PC-9 (cell line): ENCODE measurements at regions of chr3 and their contacts with region 1.

Region 1: GRCh38 chr3:102057781-102058421 is 208.6 kb downstream of the NFKBIZ start:
- DNase-seq: no peak
- H3K4me3 ChIP-seq: no peak overlapping the region
- H3K27ac ChIP-seq: no peak overlapping the region
- H3K4me1 ChIP-seq: peaks cover 8% of the 10 kb centered on the region
- H3K27me3 ChIP-seq: no peaks in the 10 kb centered on the region
- CTCF ChIP-seq: no peak

Region 2: GRCh38 chr3:101913173-101913572 is 144.7 kb before region 1 on chr3:
- CTCF ChIA-PET with region 1: no interaction called
- POLR2A ChIA-PET with region 1: no interaction called
- intact Hi-C with region 1: loop called (anchors 5 kb)
- DNase-seq: no peak
- H3K4me3 ChIP-seq: no peak overlapping the region
- H3K27ac ChIP-seq: no peak overlapping the region
- H3K4me1 ChIP-seq: no peaks in the 10 kb centered on the region
- H3K27me3 ChIP-seq: no peaks in the 10 kb centered on the region; the same call in 1 of the 2 replicates
- CTCF ChIP-seq: no peak

Region 3: GRCh38 chr3:102089904-102090492 is 32.1 kb after region 1 on chr3:
- CTCF ChIA-PET with region 1: no interaction called
- POLR2A ChIA-PET with region 1: no interaction called
- intact Hi-C with region 1: no loop called
- DNase-seq: no peak
- H3K4me3 ChIP-seq: no peak overlapping the region
- H3K27ac ChIP-seq: no peak overlapping the region
- H3K4me1 ChIP-seq: no peaks in the 10 kb centered on the region
- H3K27me3 ChIP-seq: no peaks in the 10 kb centered on the region
- CTCF ChIP-seq: no peak